ENCODE measurements at regions of chr12 and their contacts with region 1.

Region 1: GRCh38 chr12:24991209-24992049 is 42.5 kb upstream of the BCAT1 start:
- DNase-seq: no peak
- H3K4me3 ChIP-seq: no peak overlapping the region
- H3K27ac ChIP-seq: no peak overlapping the region
- H3K4me1 ChIP-seq: no peaks in the 10 kb centered on the region
- H3K27me3 ChIP-seq: peaks cover 5% of the 10 kb centered on the region
- CTCF ChIP-seq: peak; percentile 73

Region 2: GRCh38 chr12:25130741-25131188 is 139.3 kb after region 1 on chr12:
- intact Hi-C with region 1: loop called (anchors 1 kb)
- DNase-seq: no peak
- H3K4me3 ChIP-seq: no peak overlapping the region
- H3K27ac ChIP-seq: no peak overlapping the region
- H3K4me1 ChIP-seq: no peaks in the 10 kb centered on the region
- H3K27me3 ChIP-seq: no peaks in the 10 kb centered on the region
- CTCF ChIP-seq: peak; percentile 78

Region 3: GRCh38 chr12:25146686-25147085 is 155.3 kb after region 1 on chr12:
- intact Hi-C with region 1: no loop called
- DNase-seq: no peak
- H3K4me3 ChIP-seq: no peak overlapping the region
- H3K27ac ChIP-seq: no peak overlapping the region
- H3K4me1 ChIP-seq: peaks cover 5% of the 10 kb centered on the region
- H3K27me3 ChIP-seq: no peaks in the 10 kb centered on the region
- CTCF ChIP-seq: no peak